ENCODE measurements at regions of chr3 and their contacts with region 1.

Region 1: GRCh38 chr3:33773637-33774036 is 24.8 kb upstream of the PDCD6IP start:
- DNase-seq: no peak
- H3K4me3 ChIP-seq: no peak overlapping the region
- H3K27ac ChIP-seq: no peak overlapping the region
- H3K4me1 ChIP-seq: no peaks in the 10 kb centered on the region
- H3K27me3 ChIP-seq: no peaks in the 10 kb centered on the region

Region 2: DNA sequence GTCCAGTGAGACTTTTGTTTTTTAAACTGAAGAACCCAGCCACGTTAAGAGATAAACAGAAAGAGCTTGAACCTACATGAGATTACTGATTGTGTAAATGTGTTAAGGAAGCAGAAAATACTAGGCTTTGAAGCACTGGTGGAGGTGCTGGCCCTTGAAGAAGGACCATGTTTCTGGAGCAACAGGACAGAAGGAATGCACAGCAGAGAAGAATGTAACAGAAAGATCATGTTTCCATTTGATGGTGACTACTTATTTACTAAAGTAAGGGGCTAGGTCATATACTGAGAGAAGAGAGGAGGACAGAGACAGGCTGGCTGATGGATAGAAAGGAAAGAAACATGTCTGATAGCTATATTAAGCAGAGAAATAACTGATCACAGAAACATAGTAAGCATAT is 144.4 kb before region 1 on chr3:
- CTCF ChIA-PET with region 1: interaction called, 50 read pairs
- POLR2A ChIA-PET with region 1: no interaction called
- DNase-seq: no peak
- H3K4me3 ChIP-seq: no peak overlapping the region
- H3K27ac ChIP-seq: no peak overlapping the region
- H3K4me1 ChIP-seq: no peaks in the 10 kb centered on the region
- H3K27me3 ChIP-seq: no peaks in the 10 kb centered on the region

Region 3: DNA sequence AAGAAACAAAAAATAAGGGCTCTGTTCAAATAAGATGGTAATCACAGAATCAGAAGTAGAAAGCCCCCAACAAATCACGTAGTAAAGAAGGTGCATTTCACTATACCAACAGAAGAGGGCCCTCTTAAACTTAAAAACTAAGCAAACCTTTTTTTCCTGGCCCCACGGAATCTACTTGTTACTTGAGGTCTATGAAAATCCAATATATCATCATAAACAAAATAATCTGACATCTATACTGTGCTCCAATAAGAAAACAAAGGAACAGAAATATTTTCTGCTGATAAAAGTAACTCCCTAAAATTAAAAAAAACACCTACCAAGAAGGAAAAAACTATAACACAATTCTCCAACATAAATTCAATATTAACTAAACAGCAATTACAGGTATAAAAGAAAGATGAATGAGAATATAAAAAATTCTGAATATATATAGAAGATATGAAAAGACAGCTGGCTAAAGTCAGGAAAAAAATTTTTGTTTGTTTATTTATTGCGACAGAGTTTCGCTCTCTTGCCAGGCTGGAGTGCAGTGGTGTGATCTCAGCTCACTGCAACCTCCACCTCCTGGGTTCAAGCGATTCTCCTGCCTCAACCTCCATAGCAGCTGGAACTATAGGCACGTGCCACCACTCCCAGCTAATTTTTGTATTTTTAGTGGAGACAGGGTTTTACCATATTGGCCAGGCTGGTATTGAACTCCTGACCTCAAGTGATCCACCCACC is 137.3 kb before region 1 on chr3:
- CTCF ChIA-PET with region 1: interaction called, 61 read pairs
- POLR2A ChIA-PET with region 1: no interaction called
- DNase-seq: peak; percentile 79 to 89 (median 88)
- H3K4me3 ChIP-seq: no peak overlapping the region
- H3K27ac ChIP-seq: no peak overlapping the region
- H3K4me1 ChIP-seq: no peaks in the 10 kb centered on the region
- H3K27me3 ChIP-seq: no peaks in the 10 kb centered on the region

Measured in common myeloid progenitor, CD34-positive (primary cell).